ENCODE measurements at regions of chr15 and their contacts with region 1.

Region 1: GRCh38 chr15:66946578-66947164 is 118.7 kb upstream of the SMAD3 start:
- DNase-seq: peak; percentile 83
- ATAC-seq: peak; percentile 79
- H3K4me3 Mint-ChIP-seq: no peak overlapping the region
- H3K27ac Mint-ChIP-seq: no peak overlapping the region
- H3K4me1 Mint-ChIP-seq: peaks cover 4% of the 10 kb centered on the region
- H3K27me3 Mint-ChIP-seq: peaks cover 6% of the 10 kb centered on the region

Region 2: DNA sequence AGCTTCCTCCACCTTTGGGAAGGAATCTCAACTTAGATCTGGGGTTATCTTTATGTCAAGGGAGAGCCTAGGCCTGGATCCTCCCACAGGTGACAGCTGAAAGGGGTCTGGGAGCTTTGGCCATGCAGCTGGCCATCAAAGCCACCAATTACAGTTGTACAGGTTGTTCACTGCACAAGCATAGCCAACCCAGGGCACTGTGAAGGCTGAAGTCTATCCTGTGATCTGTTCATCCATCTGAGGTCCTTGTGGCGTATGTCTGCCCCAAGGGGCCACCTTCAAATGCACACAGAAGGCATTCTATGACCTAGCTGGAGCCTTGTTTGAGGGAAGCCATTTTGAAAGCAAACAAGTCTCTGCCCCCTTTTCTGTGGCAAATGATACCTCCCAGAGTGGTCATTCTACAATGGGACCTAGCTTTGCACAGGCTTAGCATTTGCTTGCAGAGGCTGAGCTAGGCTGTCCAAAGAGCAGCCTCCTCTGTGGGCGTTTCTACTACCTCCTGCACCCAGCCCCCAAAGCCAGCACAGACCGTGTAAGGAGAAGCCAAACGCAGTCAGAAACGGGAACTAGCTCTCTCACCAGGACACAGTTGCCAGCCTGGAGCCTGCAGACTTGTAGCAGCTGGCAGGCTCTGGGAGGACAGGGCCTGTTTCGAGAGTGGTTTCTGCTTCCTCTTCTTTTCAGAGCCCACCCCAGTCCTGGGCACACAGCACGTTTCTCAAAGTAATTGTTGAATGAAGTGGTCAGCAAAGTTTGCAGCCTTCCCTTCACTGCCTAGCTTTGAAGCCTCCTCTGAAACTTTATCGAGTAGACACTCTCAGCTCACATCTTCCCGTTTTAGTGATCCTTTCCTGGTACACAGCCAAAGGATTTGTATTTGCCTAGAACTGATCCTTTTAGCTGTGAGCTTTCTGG is 38.6 kb before region 1 on chr15:
- CTCF ChIA-PET with region 1: interaction called, 15 read pairs
- POLR2A ChIA-PET with region 1: no interaction called
- DNase-seq: no peak
- ATAC-seq: no peak
- H3K4me3 Mint-ChIP-seq: no peak overlapping the region
- H3K27ac Mint-ChIP-seq: peak overlapping the region; percentile 20
- H3K4me1 Mint-ChIP-seq: peaks cover 50% of the 10 kb centered on the region
- H3K27me3 Mint-ChIP-seq: no peaks in the 10 kb centered on the region

Region 3: DNA sequence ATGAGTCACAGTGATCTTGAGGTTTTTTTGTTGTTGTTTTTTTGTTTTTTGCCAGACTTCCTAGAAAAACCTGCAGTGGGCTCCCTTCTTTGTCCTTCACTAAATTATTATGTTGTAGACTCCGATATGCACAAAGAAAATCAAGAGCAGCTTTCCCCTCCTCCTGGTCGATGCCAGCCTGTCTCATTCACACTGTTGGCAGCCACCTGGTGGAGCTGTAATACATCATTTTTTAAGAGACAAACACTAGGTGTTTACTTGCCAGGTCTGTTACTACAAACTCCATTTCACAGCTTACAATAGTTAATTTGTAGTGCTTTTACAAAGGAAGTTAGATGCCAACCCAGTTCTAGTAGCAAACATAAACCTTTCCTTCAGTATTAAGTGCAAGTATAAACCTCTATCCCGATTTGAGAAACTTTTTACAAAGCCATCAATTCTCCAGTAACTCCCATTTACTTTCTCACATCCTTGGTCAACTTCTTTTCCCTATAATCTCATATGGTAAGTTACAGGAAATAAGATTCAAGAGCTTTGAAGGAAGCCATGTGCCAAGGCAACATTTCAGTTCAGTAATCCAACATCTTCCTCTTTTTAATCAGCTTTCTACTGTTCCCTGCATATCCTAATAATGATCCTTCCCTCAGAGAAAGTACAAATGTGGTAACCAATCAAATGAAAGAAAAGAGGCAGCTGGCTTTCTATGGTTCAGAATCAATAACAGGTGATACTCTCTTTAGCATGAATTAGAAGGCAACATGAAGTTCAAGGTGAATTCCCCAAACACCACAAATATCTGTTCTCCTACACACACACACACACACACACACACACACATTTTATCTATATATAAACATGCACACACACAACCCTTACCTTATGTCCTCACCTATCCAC is 293.8 kb after region 1 on chr15:
- CTCF ChIA-PET with region 1: interaction called, 11 read pairs
- POLR2A ChIA-PET with region 1: no interaction called
- DNase-seq: peak; percentile 30
- ATAC-seq: peak; percentile 64
- H3K4me3 Mint-ChIP-seq: peak overlapping the region; percentile 44
- H3K27ac Mint-ChIP-seq: peak overlapping the region; percentile 61
- H3K4me1 Mint-ChIP-seq: peaks cover 41% of the 10 kb centered on the region
- H3K27me3 Mint-ChIP-seq: no peaks in the 10 kb centered on the region

Region 4: DNA sequence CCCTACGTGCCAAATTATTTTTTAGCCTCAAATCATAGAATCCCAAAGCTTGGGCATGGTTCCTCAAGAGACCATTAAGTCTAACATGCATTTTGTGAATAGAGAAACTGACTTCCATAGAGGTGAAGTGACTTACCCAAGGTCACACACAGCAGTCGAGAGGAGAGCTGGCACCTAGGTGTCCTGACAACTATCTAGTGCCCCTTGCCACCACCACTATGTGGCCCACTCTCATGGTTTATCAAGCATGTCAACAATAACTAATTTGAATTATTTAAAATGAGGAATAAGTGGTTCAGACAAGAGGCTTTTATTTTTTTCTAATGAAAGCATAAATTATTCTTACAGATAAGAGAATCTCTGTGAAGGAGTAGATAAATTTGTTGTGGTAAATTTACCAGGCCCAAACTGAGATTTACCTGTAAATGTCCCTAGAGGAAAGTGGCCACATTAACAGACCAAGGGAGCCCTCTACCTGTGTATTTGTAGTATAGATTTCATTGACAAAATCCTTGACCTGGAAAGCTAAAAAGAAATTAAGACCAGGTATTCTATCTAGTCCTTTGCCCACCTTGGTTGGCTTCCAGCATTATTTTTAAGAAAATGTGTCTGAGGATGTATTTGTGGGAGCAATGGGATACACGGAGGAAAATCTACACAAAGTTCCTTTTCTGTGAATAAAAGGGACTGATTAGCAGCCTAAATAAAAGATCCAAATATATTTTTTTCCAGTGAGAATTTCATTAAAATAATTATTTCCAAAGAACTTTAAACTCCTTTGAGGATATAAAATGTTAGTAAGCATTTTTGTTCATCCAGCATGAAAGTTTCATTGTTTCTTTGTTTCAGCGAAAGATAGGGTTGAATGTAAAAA is 357.1 kb after region 1 on chr15:
- CTCF ChIA-PET with region 1: interaction called, 55 read pairs
- POLR2A ChIA-PET with region 1: no interaction called
- DNase-seq: peak; percentile 45
- ATAC-seq: peak; percentile 55
- H3K4me3 Mint-ChIP-seq: no peak overlapping the region
- H3K27ac Mint-ChIP-seq: no peak overlapping the region
- H3K4me1 Mint-ChIP-seq: no peaks in the 10 kb centered on the region
- H3K27me3 Mint-ChIP-seq: peaks cover 6% of the 10 kb centered on the region

Region 5: GRCh38 chr15:67433495-67434099 is 486.9 kb after region 1 on chr15:
- CTCF ChIA-PET with region 1: interaction called, 12 read pairs
- POLR2A ChIA-PET with region 1: no interaction called
- DNase-seq: peak; percentile 41
- ATAC-seq: peak; percentile 42
- H3K4me3 Mint-ChIP-seq: no peak overlapping the region
- H3K27ac Mint-ChIP-seq: no peak overlapping the region
- H3K4me1 Mint-ChIP-seq: no peaks in the 10 kb centered on the region
- H3K27me3 Mint-ChIP-seq: no peaks in the 10 kb centered on the region

Measured in activated CD8-positive, alpha-beta T cell treated with anti-CD3 and anti-CD28 coated beads, Interleukin-2, amount 10 ng/mL, durations not matched to agents 7 days and 5 days (primary cell).